Lower lobe of right lung (tissue), 2 donors: ENCODE measurements at regions of chr4 and their contacts with region 1.

Region 1: DNA sequence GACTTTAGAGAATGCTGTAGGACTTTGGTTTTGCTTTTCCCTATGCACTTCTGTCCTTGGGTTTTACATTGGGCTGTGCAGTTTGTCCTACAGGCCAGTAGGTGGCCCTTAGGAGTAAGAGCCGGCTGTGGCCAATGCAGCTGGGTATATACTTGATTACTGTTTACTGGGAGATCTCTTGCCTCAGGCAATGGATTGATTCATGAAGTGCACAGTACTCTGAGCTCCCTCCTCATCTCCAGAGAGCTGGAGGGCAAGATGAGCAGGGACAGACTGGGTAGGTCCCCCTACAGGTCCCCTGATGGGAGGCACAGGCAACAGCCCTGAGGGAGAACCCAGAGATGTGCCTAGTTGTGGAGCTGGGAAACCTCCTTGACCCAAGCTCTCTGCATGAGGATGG is 103.8 kb upstream of the QRFPR start:
- DNase-seq: peak; percentile 56
- ATAC-seq: peak; percentile 90 to 93
- H3K4me3 ChIP-seq: no peak overlapping the region
- H3K27ac ChIP-seq: no peak overlapping the region
- H3K4me1 ChIP-seq: no peaks in the 10 kb centered on the region
- H3K27me3 ChIP-seq: no peaks in the 10 kb centered on the region
- CTCF ChIP-seq: peak; percentile 76

Region 2: GRCh38 chr4:121648516-121648915 is 163.9 kb after region 1 on chr4:
- intact Hi-C with region 1: loop called (anchors 10 kb)
- DNase-seq: no peak
- ATAC-seq: no peak
- H3K4me3 ChIP-seq: no peak overlapping the region
- H3K27ac ChIP-seq: no peak overlapping the region
- H3K4me1 ChIP-seq: no peaks in the 10 kb centered on the region
- H3K27me3 ChIP-seq: no peaks in the 10 kb centered on the region
- CTCF ChIP-seq: no peak

Region 3: DNA sequence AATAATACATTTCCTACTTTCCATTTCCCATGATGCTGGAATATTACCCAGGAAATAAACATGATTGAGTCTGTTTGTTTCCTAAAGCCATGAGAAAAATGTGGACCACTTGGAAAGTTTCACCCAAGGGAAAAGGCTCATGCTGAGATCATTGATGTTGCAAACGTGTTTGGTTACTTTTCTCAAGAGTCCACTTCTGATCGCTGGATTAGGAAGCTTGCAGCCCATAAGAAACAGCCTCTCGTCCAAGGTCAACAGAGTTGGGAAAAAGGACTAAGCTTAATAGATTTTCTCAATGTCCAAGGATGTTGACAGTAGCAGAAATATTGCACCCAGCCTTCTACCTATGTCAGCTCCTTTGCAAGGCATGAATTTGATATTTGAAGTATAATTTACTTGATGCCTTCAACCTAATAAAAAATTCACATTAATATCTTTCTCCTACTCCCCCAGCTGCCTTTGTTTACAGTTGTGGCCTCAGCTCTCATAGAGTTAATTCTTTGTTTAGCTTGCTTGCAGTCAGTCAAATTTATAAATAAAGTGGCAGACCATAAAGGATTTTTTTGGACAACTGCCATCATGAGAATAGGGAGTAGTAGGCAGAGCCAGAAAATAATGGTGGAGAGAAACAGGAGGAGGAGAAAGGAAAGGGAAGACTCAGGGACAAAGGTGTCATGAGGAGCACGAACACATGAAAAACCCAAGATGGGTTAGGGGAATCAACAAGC is 601.9 kb after region 1 on chr4:
- intact Hi-C with region 1: no loop called
- DNase-seq: no peak
- ATAC-seq: peak; percentile 77 to 86
- H3K4me3 ChIP-seq: no peak overlapping the region
- H3K27ac ChIP-seq: no peak overlapping the region
- H3K4me1 ChIP-seq: no peaks in the 10 kb centered on the region
- H3K27me3 ChIP-seq: no peaks in the 10 kb centered on the region
- CTCF ChIP-seq: no peak